ENCODE measurements at regions of chr15 and their contacts with region 1.

Region 1: GRCh38 chr15:41936649-41937567 is 35.4 kb downstream of the EHD4 start:
- DNase-seq: peak; percentile 83
- H3K4me3 Mint-ChIP-seq: peak overlapping the region; percentile 63
- H3K27ac Mint-ChIP-seq: peak overlapping the region; percentile 99
- H3K4me1 Mint-ChIP-seq: peaks cover 75% of the 10 kb centered on the region
- H3K27me3 Mint-ChIP-seq: no peaks in the 10 kb centered on the region

Region 2: DNA sequence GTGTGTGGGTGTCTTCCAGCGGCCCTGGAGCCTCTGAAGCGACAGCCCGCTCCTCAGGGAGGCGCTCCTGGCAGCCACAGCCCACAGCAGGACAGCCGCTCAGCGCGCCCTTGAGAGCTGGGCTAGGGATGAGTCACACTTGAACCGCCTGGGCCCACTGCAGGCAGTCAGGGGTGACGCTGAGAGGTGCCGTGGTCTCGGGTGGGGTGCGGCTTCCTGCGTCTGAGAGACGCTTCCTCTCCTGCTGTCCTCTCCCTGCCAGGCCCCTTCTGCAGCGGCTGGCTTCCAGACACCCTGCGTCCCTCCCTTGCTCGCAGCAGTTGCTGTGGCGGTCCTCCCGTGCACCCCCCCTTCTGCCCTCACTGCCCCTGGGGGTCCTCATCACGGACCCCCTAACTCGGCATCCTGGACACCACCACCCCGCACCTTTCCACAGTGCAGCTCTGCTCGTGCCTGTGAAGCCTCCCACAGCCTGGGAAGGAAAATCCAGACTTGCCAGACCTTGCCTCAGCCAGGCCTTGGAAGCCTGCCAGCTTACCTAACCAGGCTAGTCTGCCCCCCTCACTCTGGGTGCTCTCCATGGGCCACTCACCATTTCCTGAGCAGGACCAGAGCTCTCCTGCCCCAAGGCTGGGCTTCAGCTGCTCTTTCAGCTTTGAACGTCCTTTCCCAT is 42.0 kb before region 1 on chr15:
- CTCF ChIA-PET with region 1: interaction called, 17 read pairs
- POLR2A ChIA-PET with region 1: interaction called, 28 read pairs
- DNase-seq: peak; percentile 92
- H3K4me3 Mint-ChIP-seq: peak overlapping the region; percentile 54
- H3K27ac Mint-ChIP-seq: peak overlapping the region; percentile 94
- H3K4me1 Mint-ChIP-seq: peaks cover 48% of the 10 kb centered on the region
- H3K27me3 Mint-ChIP-seq: no peaks in the 10 kb centered on the region

Region 3: GRCh38 chr15:41904541-41905005 is 32.3 kb before region 1 on chr15:
- CTCF ChIA-PET with region 1: interaction called, 16 read pairs
- POLR2A ChIA-PET with region 1: interaction called, 11 read pairs
- DNase-seq: peak; percentile 80
- H3K4me3 Mint-ChIP-seq: no peak overlapping the region
- H3K27ac Mint-ChIP-seq: peak overlapping the region; percentile 52
- H3K4me1 Mint-ChIP-seq: peaks cover 13% of the 10 kb centered on the region
- H3K27me3 Mint-ChIP-seq: no peaks in the 10 kb centered on the region

Region 4: DNA sequence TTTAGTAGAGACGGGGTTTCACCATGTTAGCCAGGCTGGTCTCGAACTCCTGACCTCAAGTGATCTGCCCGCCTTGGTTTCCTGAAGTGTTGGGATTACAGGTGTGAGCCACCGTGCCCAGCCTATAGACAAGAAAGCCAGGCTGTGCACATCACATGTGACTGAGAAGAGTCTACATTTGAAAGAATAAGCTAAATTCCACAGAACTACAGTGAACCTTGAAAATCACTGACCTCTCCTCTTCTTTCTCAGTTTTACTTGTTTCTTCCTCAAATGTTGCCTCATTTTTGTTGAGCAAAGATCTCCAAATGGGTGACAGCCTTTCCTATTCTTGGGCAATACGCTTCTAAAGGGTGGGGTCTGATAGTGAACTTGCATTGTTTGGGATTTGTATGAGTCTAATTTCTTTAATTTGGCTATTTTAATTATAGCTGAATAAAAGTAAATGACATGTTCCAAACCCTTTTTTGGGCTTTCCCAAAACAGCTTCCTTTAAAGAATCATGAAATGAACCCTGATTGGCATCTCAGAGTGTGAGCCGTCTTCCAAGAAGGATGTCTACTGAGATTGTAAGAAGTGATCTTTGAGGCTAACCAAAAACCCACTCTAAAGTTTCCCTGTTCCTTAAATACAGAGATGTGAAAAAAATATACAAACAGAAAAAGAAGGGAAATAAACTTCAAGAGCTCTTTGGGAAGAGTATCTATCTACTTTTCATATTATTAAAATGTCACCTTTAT is 21.5 kb before region 1 on chr15:
- CTCF ChIA-PET with region 1: interaction called, 10 read pairs
- POLR2A ChIA-PET with region 1: interaction called, 3 read pairs
- DNase-seq: no peak
- H3K4me3 Mint-ChIP-seq: no peak overlapping the region
- H3K27ac Mint-ChIP-seq: no peak overlapping the region
- H3K4me1 Mint-ChIP-seq: peaks cover 18% of the 10 kb centered on the region
- H3K27me3 Mint-ChIP-seq: no peaks in the 10 kb centered on the region

Region 5: GRCh38 chr15:41923401-41923997 is 13.4 kb before region 1 on chr15:
- CTCF ChIA-PET with region 1: interaction called, 9 read pairs
- POLR2A ChIA-PET with region 1: interaction called, 10 read pairs
- DNase-seq: no peak
- H3K4me3 Mint-ChIP-seq: no peak overlapping the region
- H3K27ac Mint-ChIP-seq: no peak overlapping the region
- H3K4me1 Mint-ChIP-seq: peaks cover 39% of the 10 kb centered on the region
- H3K27me3 Mint-ChIP-seq: no peaks in the 10 kb centered on the region

Region 6: DNA sequence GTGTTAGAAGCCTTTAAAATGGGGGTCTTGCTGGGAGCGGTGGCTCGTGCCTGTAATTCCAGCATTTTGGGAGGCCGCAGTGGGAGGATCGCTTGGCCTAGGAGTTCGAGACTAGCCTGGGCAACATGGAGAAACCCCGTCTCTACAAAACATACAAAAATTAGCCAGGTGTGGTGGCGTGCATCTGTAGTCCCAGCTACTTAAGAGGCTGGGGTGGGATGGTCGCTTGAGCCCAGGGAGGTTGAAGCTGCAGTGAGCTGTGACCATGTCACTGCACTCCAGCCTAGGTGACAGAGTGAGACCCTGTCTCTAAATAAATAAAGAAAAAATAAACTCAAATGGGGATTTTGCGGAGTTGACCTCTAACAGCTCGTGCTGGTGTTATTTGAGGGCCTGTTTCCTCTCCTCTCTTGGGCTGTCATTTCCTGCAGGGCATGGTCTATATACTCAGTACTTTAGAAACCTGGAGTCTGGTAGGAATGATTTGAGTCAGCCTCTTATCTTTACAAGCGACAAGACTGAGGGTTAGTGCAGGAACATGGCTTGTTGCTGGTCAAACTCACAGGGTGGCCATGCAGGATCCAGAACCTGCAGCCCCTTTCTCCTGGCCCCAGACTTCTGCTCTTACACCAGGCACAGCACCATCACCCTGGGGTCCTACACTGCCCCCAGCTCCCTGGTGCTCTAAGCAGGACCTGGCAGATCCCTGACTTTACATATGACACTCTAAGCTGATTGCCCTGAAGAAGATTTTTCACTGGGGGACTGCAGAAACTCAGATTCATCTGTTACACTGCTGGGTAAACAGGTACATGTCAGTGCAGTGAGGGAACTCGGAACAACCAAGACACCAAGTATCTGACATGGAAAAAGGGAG is 20.4 kb after region 1 on chr15:
- CTCF ChIA-PET with region 1: interaction called, 7 read pairs
- POLR2A ChIA-PET with region 1: interaction called, 26 read pairs
- DNase-seq: no peak
- H3K4me3 Mint-ChIP-seq: no peak overlapping the region
- H3K27ac Mint-ChIP-seq: peak overlapping the region; percentile 69
- H3K4me1 Mint-ChIP-seq: peaks cover 47% of the 10 kb centered on the region
- H3K27me3 Mint-ChIP-seq: no peaks in the 10 kb centered on the region

Region 7: DNA sequence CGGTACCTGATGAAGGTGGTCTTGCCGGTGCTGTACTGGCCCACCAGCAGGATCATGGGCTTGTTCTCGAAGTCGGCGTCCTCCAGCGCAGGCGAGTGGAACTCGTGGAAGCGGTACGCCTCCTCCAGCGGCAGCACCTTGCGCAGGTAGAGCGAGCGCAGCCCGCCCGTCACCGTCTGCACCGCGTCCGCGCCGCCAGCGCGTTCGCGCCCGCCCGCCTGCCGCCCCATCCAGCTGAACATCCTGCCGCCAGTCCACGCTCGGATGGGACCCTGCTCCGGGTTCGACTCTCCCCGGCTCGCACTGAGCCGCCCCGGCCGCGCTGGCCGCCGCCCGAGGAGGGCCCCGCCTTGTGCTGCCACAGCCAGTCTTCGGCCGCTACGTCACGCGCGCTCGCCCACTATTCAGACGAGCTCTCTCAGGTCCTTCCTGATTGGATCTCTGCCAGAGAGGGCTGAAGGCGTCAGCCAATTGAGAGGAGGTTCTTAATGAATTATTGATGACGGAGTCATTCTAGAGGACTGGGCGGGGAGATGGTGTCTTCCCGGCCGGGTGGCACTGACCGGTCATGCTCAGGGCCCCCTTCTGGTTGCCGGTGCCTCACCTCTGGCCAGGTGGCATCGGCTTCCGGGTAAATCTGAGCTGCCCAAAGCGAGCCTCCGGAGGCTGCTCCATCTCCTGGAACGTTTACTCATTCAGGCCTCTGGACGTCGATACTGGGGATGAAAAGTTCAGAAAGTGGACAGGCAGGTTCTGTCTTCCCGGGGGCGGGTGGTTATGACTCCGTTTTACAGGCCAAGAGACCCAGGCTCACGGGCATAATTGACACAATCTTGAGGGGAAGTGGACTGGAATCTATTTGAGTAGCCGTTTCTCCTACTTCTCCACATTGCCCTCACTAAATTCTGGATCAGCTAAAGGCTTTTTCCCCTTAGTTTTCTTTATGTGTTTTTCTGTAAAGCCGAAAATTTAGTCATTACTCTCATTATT is 35.6 kb after region 1 on chr15 and contains the start of gene EHD4:
- CTCF ChIA-PET with region 1: interaction called, 48 read pairs
- POLR2A ChIA-PET with region 1: interaction called, 186 read pairs
- DNase-seq: peak; percentile 96
- H3K4me3 Mint-ChIP-seq: peak within 1 kb of the TSS; percentile 82
- H3K27ac Mint-ChIP-seq: peak within 1 kb of the TSS; percentile 90
- H3K4me1 Mint-ChIP-seq: peaks cover 55% of the 10 kb centered on the region
- H3K27me3 Mint-ChIP-seq: peaks cover 18% of the 10 kb centered on the region
- total RNA-seq, gene EHD4: 25.0 to 25.3 TPM